Activated CD8-positive, alpha-beta T cell treated with anti-CD3 and anti-CD28 coated beads, Interleukin-2, amount 10 ng/mL, durations not matched to agents 7 days and 5 days (primary cell): ENCODE measurements at regions of chr14 and their contacts with region 1.

Region 1: GRCh38 chr14:95561001-95561412 is 26.2 kb downstream of the GLRX5 start:
- DNase-seq: peak; percentile 90
- ATAC-seq: peak; percentile 95
- H3K4me3 Mint-ChIP-seq: no peak overlapping the region
- H3K27ac Mint-ChIP-seq: no peak overlapping the region
- H3K4me1 Mint-ChIP-seq: no peaks in the 10 kb centered on the region
- H3K27me3 Mint-ChIP-seq: peaks cover 2% of the 10 kb centered on the region

Region 2: DNA sequence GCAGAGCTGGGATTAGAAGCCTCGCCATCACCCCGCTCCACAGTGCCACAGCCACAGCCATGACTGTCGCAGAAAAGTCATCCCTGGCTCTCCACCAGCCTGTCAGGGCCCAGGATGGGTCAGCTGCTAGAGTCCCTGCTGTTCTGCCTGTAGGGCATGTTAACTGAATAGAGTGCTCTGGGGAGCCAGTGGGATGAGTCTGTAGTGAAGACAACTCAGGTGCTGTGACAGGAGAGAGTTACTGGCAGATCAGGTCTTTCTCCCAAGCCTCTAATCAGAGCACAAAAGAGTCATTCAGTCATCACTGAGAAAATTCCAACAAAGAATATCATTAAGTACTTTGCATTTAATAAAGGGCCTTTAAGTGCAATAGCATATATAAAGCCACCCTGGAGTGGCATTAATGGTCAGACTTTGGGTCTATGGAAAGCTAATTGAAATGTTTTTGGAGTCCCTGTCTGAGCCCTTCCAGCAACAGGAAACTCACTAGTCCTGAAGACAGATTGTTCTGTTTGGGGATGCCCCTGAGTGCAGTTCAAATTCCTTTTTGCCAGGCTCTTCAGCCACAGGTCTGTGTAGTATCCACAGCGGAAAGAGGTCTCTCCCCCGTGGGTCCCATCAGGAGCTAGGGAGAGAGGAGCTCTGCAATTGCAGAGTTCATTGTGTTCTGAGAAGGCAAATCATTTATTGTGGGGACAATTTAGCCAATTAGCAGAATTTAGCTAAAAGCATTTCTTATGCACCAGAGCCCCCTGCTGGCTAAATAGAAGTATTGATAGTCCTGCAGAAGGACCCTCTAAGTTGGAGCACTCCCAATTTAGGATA is 433.0 kb after region 1 on chr14:
- CTCF ChIA-PET with region 1: interaction called, 14 read pairs
- POLR2A ChIA-PET with region 1: no interaction called
- DNase-seq: peak; percentile 40
- ATAC-seq: no peak
- H3K4me3 Mint-ChIP-seq: no peak overlapping the region
- H3K27ac Mint-ChIP-seq: no peak overlapping the region
- H3K4me1 Mint-ChIP-seq: no peaks in the 10 kb centered on the region
- H3K27me3 Mint-ChIP-seq: peaks cover 19% of the 10 kb centered on the region